ENCODE measurements at regions of chr2 and their contacts with region 1.

Region 1: GRCh38 chr2:152664703-152665102 is 52.6 kb downstream of the PRPF40A start:
- DNase-seq: no peak
- ATAC-seq: no peak
- H3K4me3 ChIP-seq: no peak overlapping the region
- H3K4me3 Mint-ChIP-seq: no peak overlapping the region
- H3K27ac ChIP-seq: no peak overlapping the region
- H3K27ac Mint-ChIP-seq: peak overlapping the region in 1 of 9 donors; percentile 53
- H3K4me1 ChIP-seq: no peaks in the 10 kb centered on the region
- H3K4me1 Mint-ChIP-seq: no peaks in the 10 kb centered on the region
- H3K27me3 ChIP-seq: no peaks in the 10 kb centered on the region
- H3K27me3 Mint-ChIP-seq: no peaks in the 10 kb centered on the region

Region 2: GRCh38 chr2:151465771-151466170 is 1198.9 kb before region 1 on chr2:
- CTCF ChIA-PET with region 1: no interaction called
- POLR2A ChIA-PET with region 1: no interaction called
- intact Hi-C with region 1: loop called in 1 of 2 experiments (anchors 10 kb)
- DNase-seq: no peak
- ATAC-seq: no peak
- H3K4me3 ChIP-seq: no peak overlapping the region
- H3K4me3 Mint-ChIP-seq: no peak overlapping the region
- H3K27ac ChIP-seq: no peak overlapping the region
- H3K27ac Mint-ChIP-seq: no peak overlapping the region
- H3K4me1 ChIP-seq: no peaks in the 10 kb centered on the region
- H3K4me1 Mint-ChIP-seq: peaks cover 0 to 20% (median under 1%) of the 10 kb centered on the region in 7 donors
- H3K27me3 ChIP-seq: no peaks in the 10 kb centered on the region
- H3K27me3 Mint-ChIP-seq: no peaks in the 10 kb centered on the region

Measured in naive thymus-derived CD4-positive, alpha-beta T cell (primary cell).